ENCODE measurements at regions of chr1 and their contacts with region 1.

Region 1: DNA sequence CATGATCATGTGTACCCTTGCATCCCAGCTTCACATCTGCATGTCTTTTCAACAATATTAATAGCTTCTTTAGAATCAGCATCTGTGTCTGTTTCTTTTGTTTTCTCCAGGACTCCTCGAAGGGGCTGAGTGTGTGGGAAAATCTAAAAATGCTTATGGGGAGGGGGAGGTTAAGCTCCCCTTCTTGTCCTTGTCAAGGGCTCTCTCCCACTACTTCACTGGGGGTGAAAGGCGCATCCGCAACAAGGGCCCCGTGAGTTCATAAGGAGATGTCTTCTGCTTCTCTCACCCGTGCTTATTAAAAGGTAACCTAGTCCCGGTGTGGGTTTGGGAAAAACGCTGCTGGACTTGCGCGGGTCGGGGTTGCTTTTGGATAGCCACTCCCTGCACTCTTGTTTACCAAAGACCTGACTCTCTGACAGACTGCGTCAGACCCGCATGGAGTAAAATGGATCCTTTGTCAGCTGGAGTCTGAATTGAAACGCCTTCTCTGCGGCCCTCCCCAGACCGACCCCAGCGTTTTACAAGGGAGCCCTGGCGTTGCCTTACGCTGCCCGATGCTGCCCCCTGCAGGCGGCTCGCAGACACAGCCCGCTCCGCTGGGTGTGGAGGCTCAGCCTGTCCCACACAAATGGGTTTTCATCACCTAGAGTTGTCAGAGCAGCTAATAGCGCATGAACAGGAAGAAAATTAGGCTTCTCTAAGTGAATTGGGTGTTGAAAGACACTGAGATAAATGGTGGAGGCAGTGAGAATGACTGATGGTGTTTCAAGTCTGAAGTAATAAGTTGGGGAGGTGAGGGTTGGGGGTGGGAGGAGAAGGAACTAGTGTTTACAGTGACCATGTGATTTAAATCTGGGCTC is 53.8 kb downstream of the IER5 start:
- DNase-seq: peak; percentile 93
- H3K4me3 Mint-ChIP-seq: peak overlapping the region; percentile 24
- H3K27ac Mint-ChIP-seq: peak overlapping the region; percentile 67
- H3K4me1 Mint-ChIP-seq: peaks cover 46% of the 10 kb centered on the region
- H3K27me3 Mint-ChIP-seq: peaks cover 3% of the 10 kb centered on the region

Region 2: GRCh38 chr1:180631766-180632325 is 510.5 kb before region 1 on chr1 and contains the start of gene XPR1:
- CTCF ChIA-PET with region 1: no interaction called
- POLR2A ChIA-PET with region 1: no interaction called
- intact Hi-C with region 1: loop called (anchors 10 kb)
- DNase-seq: peak; percentile 99
- H3K4me3 Mint-ChIP-seq: no peak within 1 kb of the TSS
- H3K27ac Mint-ChIP-seq: peak within 1 kb of the TSS; percentile 82
- H3K4me1 Mint-ChIP-seq: peaks cover 5% of the 10 kb centered on the region
- H3K27me3 Mint-ChIP-seq: no peaks in the 10 kb centered on the region
- total RNA-seq, gene XPR1: 17.9 to 18.4 TPM

Region 3: DNA sequence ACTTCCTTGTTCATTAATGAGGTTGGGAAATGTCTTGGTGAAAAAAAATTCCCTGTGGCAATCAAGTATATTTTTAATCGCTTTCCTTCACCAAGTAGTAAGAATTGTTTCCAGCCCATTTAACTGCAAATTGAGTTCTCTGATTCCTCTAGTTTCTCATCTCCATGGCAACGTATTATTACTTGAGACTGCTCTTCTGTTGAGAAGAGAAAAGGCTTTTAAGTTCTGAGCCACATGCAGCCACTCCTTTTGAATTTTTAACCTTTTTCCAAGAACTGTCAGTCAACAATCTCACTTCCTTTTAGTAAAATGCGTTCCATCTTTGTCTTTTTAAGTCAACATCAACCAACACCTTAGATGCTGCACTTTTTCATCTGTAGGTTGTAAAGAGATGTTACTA is 305.3 kb before region 1 on chr1:
- CTCF ChIA-PET with region 1: no interaction called
- POLR2A ChIA-PET with region 1: no interaction called
- intact Hi-C with region 1: no loop called
- DNase-seq: no peak
- H3K4me3 Mint-ChIP-seq: no peak overlapping the region
- H3K27ac Mint-ChIP-seq: no peak overlapping the region
- H3K4me1 Mint-ChIP-seq: peaks cover 10% of the 10 kb centered on the region
- H3K27me3 Mint-ChIP-seq: no peaks in the 10 kb centered on the region

Region 4: DNA sequence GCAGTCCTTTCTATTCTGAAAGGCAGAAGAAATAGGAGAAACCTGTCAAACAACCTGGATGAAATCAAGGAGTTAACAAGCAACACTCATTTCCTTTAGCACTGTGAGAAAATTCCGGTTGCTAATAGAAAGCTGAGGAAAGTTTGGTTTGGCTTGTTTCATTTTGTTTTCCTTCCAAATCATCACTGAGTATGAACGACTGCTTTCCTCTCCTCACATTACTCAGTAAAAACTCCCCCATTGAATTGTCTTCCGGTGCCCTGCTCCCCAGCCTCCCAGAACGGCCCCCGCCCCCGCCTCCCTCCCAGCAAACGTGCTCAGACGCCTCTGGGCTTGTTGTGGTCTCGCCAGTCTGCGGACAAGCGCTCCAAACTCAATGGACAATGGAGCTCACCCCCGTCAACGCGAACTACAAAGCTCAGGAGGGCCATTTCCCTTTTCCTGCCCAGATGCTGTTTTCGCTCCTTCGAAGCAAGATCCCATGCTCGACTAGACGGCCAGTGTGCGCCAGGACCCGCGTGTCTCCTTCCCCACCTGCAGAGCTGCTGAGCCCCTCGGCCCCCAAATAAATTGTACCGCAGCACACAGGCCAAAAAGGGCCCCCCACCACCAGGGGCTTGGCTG is 120.4 kb before region 1 on chr1:
- CTCF ChIA-PET with region 1: interaction called, 16 read pairs
- POLR2A ChIA-PET with region 1: interaction called, 3 read pairs
- intact Hi-C with region 1: no loop called
- DNase-seq: peak; percentile 84
- H3K4me3 Mint-ChIP-seq: peak overlapping the region; percentile 94
- H3K27ac Mint-ChIP-seq: peak overlapping the region; percentile 97
- H3K4me1 Mint-ChIP-seq: peaks cover 37% of the 10 kb centered on the region
- H3K27me3 Mint-ChIP-seq: no peaks in the 10 kb centered on the region

Region 5: DNA sequence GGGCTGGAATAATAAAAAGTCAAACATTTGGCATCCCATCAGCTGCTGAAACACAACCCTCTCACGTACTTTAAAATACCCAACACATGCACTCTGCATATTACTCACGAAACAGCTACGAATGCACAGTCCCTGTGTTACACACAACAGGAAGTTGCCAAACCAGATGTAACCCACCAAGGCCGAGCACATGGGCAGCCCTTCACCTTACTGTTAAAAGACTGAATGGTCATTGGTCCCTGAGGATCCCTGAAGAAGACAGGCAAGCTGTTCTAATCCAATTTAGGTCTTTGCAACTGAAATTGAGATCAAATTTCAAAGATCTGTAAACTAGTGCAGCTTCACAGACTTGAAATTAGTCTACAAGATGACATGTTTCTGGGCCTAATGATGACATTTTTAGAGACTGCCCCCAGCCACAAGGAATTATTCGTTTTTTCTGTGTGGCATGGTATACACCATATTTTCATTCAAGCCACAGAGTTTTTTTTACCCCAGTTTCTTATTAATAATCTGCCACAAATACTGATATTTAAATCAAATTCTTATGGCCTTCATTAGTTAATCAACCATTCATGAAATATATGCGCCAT is 79.4 kb before region 1 on chr1:
- CTCF ChIA-PET with region 1: interaction called, 19 read pairs
- POLR2A ChIA-PET with region 1: no interaction called
- intact Hi-C with region 1: loop called (anchors 1 kb)
- DNase-seq: peak; percentile 61
- H3K4me3 Mint-ChIP-seq: peak overlapping the region; percentile 58
- H3K27ac Mint-ChIP-seq: peak overlapping the region; percentile 78
- H3K4me1 Mint-ChIP-seq: peaks cover 20% of the 10 kb centered on the region
- H3K27me3 Mint-ChIP-seq: no peaks in the 10 kb centered on the region

Region 6: GRCh38 chr1:181099152-181100014 is 42.9 kb before region 1 on chr1:
- CTCF ChIA-PET with region 1: interaction called, 229 read pairs
- POLR2A ChIA-PET with region 1: interaction called, 23 read pairs
- intact Hi-C with region 1: loop called (anchors 1 kb)
- DNase-seq: peak; percentile 76
- H3K4me3 Mint-ChIP-seq: peak overlapping the region; percentile 47
- H3K27ac Mint-ChIP-seq: peak overlapping the region; percentile 84
- H3K4me1 Mint-ChIP-seq: peaks cover 71% of the 10 kb centered on the region
- H3K27me3 Mint-ChIP-seq: no peaks in the 10 kb centered on the region

Region 7: DNA sequence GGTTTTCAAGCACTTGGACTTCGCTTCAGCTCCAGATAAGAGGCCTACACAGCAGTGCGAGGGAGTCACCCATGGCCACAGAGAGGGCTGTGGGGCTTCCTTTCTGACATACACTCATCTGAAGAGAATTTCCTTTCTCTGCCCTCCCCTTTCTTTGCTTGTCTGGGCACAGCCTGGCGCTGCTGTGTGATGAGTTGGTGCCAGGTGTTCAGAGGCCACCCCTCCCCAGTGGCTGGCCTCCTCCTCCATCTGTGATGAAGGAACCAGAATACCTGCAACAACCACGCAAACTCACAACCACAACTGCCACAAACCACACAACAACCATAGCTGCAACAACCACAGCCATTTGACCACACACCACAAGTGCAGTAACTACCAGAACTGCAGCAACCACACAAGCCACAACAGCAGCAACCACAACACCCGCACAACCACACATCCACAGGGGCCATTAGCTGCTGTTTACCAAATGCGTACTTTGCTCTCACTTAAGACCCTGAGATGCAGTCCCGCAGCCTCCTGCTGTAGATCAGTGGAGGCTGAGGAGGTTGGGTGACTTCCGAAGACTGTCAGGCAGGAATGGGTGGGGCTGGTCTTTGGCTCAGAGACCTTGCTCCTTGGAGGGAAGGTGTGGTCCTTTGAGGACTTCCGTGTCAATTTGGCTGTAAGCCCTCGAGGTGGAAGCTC is 17.3 kb after region 1 on chr1:
- CTCF ChIA-PET with region 1: interaction called, 48 read pairs
- POLR2A ChIA-PET with region 1: no interaction called
- intact Hi-C with region 1: no loop called
- DNase-seq: peak; percentile 71
- H3K4me3 Mint-ChIP-seq: peak overlapping the region; percentile 34
- H3K27ac Mint-ChIP-seq: peak overlapping the region; percentile 66
- H3K4me1 Mint-ChIP-seq: peaks cover 28% of the 10 kb centered on the region
- H3K27me3 Mint-ChIP-seq: no peaks in the 10 kb centered on the region

Region 8: GRCh38 chr1:181189691-181190363 is 47.5 kb after region 1 on chr1:
- CTCF ChIA-PET with region 1: no interaction called
- POLR2A ChIA-PET with region 1: no interaction called
- intact Hi-C with region 1: no loop called
- DNase-seq: peak; percentile 81
- H3K4me3 Mint-ChIP-seq: no peak overlapping the region
- H3K27ac Mint-ChIP-seq: no peak overlapping the region
- H3K4me1 Mint-ChIP-seq: peaks cover 2% of the 10 kb centered on the region
- H3K27me3 Mint-ChIP-seq: no peaks in the 10 kb centered on the region